ENCODE measurements at regions of chr1 and their contacts with region 1.

Region 1: GRCh38 chr1:203216274-203217138 is 13.0 kb downstream of the CHIT1 start:
- DNase-seq: peak; percentile 71 to 86
- H3K4me3 ChIP-seq: peak overlapping the region in 2 of 4 experiments; percentile 17 to 40; a peak in 3 of 8 replicates
- H3K27ac ChIP-seq: no peak overlapping the region
- H3K4me1 ChIP-seq: peaks cover 0 to 12% (median 11%) of the 10 kb centered on the region in 4 experiments; a peak in 6 of 7 replicates
- H3K27me3 ChIP-seq: no peaks in the 10 kb centered on the region
- CTCF ChIP-seq: peak; percentile 29 to 85 (median 78)
- EP300 ChIP-seq: no peak
- POLR2A ChIP-seq: no peak
- RAD21 ChIP-seq: peak; percentile 87 to 91

Region 2: GRCh38 chr1:203057911-203058675 is 158.4 kb before region 1 on chr1:
- CTCF ChIA-PET with region 1: interaction called, 71 read pairs
- POLR2A ChIA-PET with region 1: interaction called, 3 read pairs
- DNase-seq: no peak
- H3K4me3 ChIP-seq: no peak overlapping the region
- H3K27ac ChIP-seq: no peak overlapping the region
- H3K4me1 ChIP-seq: peaks cover 10 to 23% (median 17%) of the 10 kb centered on the region in 4 experiments
- H3K27me3 ChIP-seq: no peaks in the 10 kb centered on the region
- CTCF ChIP-seq: no peak
- EP300 ChIP-seq: no peak
- POLR2A ChIP-seq: no peak
- RAD21 ChIP-seq: no peak

Region 3: DNA sequence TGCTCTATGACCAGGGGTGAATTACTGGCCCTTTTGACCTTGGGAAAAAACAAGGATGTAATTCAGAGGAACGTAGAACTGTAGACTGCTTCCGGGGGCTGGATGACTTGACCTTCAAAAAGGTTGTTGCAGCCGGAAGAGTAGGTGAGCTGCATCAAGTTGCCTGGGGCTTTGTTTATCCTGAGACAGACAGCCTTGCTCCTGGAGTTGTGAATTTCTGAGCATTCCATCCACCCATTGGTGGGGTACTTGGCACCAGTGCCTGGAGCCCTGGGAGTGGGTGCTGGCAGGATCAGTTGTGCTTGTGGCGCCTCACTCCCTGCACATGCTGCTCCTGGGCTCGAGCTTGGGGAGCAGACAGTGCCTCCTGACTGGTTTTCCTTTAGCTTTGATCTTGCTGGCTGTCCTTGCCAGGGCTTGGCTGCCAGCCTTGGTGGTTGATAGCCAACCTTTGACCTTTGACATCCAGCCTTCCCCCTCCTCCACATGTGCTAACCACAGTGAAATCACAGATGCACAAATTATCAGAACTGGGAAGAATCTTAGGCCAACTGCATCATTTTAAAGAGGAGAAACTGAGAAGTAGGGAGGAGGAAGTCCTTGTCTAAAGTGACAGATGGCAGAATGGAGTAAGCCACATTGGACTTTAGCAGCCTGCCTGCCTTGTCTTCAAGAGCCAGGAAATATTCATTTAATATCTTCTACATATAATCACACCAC is 114.4 kb before region 1 on chr1:
- CTCF ChIA-PET with region 1: interaction called, 17 read pairs
- POLR2A ChIA-PET with region 1: no interaction called
- DNase-seq: no peak
- H3K4me3 ChIP-seq: no peak overlapping the region
- H3K27ac ChIP-seq: no peak overlapping the region
- H3K4me1 ChIP-seq: no peaks in the 10 kb centered on the region
- H3K27me3 ChIP-seq: peaks cover 0 to 4% (median 0%) of the 10 kb centered on the region in 4 experiments; a peak in 1 of 7 replicates
- CTCF ChIP-seq: no peak
- EP300 ChIP-seq: no peak
- POLR2A ChIP-seq: no peak
- RAD21 ChIP-seq: no peak

Region 4: GRCh38 chr1:203148125-203148524 is 68.4 kb before region 1 on chr1:
- CTCF ChIA-PET with region 1: interaction called, 52 read pairs
- POLR2A ChIA-PET with region 1: no interaction called
- DNase-seq: no peak
- H3K4me3 ChIP-seq: no peak overlapping the region
- H3K27ac ChIP-seq: no peak overlapping the region
- H3K4me1 ChIP-seq: peaks cover 7 to 43% (median 19%) of the 10 kb centered on the region in 4 experiments
- H3K27me3 ChIP-seq: no peaks in the 10 kb centered on the region
- CTCF ChIP-seq: peak; percentile 35 to 63 (median 52); a peak in 3 of 4 replicates
- EP300 ChIP-seq: no peak
- POLR2A ChIP-seq: no peak
- RAD21 ChIP-seq: no peak; a peak in 1 of 4 replicates

Region 5: GRCh38 chr1:203177470-203178039 is 39.0 kb before region 1 on chr1:
- CTCF ChIA-PET with region 1: interaction called, 155 read pairs
- POLR2A ChIA-PET with region 1: no interaction called
- DNase-seq: no peak
- H3K4me3 ChIP-seq: no peak overlapping the region
- H3K27ac ChIP-seq: no peak overlapping the region
- H3K4me1 ChIP-seq: peaks cover 0 to 7% (median 3%) of the 10 kb centered on the region in 4 experiments; a peak in 4 of 7 replicates
- H3K27me3 ChIP-seq: no peaks in the 10 kb centered on the region
- CTCF ChIP-seq: no peak
- EP300 ChIP-seq: no peak
- POLR2A ChIP-seq: no peak
- RAD21 ChIP-seq: no peak

Region 6: GRCh38 chr1:203229471-203230135 is 13.1 kb after region 1 on chr1 and contains the start of gene CHIT1:
- CTCF ChIA-PET with region 1: interaction called, 40 read pairs
- POLR2A ChIA-PET with region 1: interaction called, 4 read pairs
- DNase-seq: no peak
- H3K4me3 ChIP-seq: no peak within 1 kb of the TSS
- H3K27ac ChIP-seq: no peak within 1 kb of the TSS
- H3K4me1 ChIP-seq: no peaks in the 10 kb centered on the region
- H3K27me3 ChIP-seq: no peaks in the 10 kb centered on the region
- CTCF ChIP-seq: no peak
- EP300 ChIP-seq: no peak
- POLR2A ChIP-seq: no peak
- RAD21 ChIP-seq: no peak
- total RNA-seq, gene CHIT1: not detected in 2 replicates